Upper lobe of right lung (tissue), 1 donor: ENCODE measurements at regions of chr9 and their contacts with region 1.

Region 1: GRCh38 chr9:38068866-38069629 is at the start of gene SHB:
- DNase-seq: peak; percentile 94
- ATAC-seq: peak; percentile 81
- H3K4me3 ChIP-seq: peak within 1 kb of the TSS; percentile 94
- H3K27ac ChIP-seq: peak within 1 kb of the TSS; percentile 93
- H3K4me1 ChIP-seq: peaks cover 34% of the 10 kb centered on the region
- H3K27me3 ChIP-seq: no peaks in the 10 kb centered on the region
- CTCF ChIP-seq: no peak
- total RNA-seq, gene SHB: 33.4 TPM

Region 2: DNA sequence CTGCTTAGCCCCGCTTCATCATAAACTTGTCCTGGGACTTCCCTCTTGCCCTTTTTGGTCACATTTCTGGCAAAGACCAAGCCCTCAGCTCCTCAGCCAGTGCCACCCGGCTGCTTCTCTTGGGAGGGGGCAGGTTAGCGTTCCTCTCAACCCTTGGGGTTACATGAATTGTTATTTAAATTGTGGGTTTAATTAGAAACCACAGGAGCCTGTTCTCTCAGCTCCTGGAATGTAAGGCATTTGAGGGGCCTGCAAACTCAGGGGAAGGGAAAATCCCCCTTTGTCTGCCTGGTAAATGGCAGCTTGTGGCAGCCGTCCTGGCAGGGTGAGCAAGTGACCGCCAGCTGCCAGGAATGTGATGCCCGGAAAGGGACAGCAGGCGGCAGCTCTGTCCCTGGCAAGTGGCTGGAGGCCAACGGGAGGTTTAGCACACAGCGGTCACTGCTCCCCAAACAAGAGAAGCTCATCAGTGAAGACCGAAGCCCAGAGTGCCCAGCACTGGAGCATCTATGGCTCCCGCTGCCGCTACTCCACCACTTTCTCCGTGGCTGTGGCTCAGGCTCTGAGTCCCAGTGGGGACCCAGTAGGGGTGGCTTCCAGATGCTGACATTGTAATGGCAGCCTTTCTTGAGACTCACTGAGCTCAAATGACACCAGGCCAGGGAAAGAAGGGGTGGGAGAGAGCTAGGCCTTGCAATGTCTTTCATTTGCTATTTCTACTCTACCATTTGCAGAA is 51.7 kb before region 1 on chr9:
- intact Hi-C with region 1: loop called (anchors 5 kb)
- DNase-seq: peak; percentile 87
- ATAC-seq: peak; percentile 85
- H3K4me3 ChIP-seq: no peak overlapping the region
- H3K27ac ChIP-seq: peak overlapping the region; percentile 13
- H3K4me1 ChIP-seq: peaks cover 51% of the 10 kb centered on the region
- H3K27me3 ChIP-seq: no peaks in the 10 kb centered on the region
- CTCF ChIP-seq: peak; percentile 53

Region 3: GRCh38 chr9:38160613-38161215 is 91.7 kb after region 1 on chr9:
- intact Hi-C with region 1: no loop called
- DNase-seq: no peak
- ATAC-seq: peak; percentile 81
- H3K4me3 ChIP-seq: no peak overlapping the region
- H3K27ac ChIP-seq: no peak overlapping the region
- H3K4me1 ChIP-seq: no peaks in the 10 kb centered on the region
- H3K27me3 ChIP-seq: no peaks in the 10 kb centered on the region
- CTCF ChIP-seq: peak; percentile 89